ENCODE measurements at regions of chr17 and their contacts with region 1.

Region 1: DNA sequence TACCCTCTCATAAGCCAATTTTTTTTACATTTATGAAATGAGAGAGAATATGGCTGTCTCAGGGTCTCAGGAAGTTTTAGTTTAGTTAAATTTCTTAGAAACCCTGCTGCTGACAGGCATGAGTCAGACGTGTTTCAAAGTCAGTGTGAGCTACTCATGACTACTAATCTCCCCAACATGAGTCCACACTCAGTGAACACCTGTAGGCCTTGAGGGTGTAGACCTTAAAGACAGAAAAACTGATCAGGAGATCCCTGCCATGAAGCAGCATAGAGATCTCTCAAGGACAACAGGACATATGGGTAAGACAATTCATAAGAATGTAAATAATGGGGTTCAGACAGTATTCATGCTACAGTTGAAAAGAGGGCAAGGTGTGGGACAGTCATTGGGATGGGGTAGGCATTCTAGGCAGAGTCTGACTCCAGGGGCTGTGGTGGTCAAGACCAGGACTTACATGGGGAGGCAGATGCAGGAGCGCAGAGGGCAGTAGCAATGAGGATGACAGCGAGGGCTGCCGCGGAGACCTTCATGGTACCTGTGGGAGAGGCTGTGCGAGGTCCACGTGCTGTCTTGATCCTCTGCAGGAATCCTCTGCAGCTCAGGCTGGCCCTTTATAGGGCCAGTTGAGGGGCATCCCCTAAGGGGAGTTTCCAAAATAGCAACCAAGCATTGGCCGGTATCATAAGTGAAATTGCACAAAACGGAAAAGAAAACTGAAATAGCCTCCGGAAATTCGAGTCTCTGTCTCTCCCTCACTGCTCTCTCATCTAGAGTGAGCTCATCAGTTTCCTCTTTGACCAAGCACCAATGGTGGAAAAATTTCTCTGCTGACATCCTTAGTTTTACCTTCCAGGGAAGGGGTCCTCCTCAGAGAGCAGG is at the start of gene CCL5:
- DNase-seq: peak; percentile 82
- H3K4me3 Mint-ChIP-seq: peak within 1 kb of the TSS; percentile 94
- H3K27ac Mint-ChIP-seq: peak within 1 kb of the TSS; percentile 95
- H3K4me1 Mint-ChIP-seq: peaks cover 58% of the 10 kb centered on the region
- H3K27me3 Mint-ChIP-seq: no peaks in the 10 kb centered on the region
- total RNA-seq, gene CCL5: 482 to 491 TPM

Region 2: DNA sequence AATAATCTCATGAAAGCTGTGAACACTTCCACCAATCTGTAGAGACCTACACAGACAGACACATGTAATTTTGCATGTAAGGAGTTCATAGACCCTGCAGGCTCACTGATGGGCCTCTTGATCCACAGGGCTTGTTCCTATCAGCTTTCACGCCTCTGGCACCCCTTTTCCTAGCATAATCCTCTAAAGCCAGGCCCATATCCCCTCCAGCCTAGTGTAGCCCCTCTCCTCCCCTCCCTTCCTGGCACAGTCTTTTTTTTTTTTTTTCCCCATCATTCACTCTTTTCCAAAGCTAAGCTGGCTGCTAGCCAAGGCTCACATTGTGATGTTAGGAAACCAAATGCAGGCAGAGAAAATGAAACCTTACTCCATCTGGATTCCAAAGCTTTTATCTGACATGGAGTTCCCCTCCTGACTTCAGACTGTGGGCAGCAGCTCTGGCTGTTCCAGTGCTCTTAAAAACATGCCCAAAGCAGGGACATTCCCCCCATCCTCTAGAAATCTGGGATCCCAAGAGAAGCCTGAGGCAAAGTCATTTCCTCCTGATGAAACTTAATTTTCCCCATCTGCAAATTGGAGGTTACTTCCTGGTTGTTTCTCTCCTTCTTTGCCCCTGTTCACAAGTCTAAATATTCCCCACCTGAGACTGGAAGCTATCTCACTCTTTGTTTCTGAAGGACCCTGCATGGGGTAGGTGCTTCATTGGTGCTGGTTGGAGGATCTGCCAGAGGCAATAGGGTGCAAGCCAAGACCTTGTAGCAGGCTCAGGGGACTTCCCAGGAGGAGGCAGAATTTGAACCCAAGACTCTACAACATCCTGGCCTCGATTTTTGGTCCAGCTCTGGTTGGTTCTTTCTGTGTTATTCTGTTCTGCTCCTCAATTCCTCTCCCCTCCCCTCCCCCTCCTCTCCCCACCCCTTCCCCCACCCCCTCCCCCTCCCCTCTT is 10.1 kb after region 1 on chr17:
- CTCF ChIA-PET with region 1: interaction called, 10 read pairs
- POLR2A ChIA-PET with region 1: interaction called, 228 read pairs
- DNase-seq: no peak
- H3K4me3 Mint-ChIP-seq: peak overlapping the region; percentile 22
- H3K27ac Mint-ChIP-seq: peak overlapping the region; percentile 86
- H3K4me1 Mint-ChIP-seq: peaks cover 69% of the 10 kb centered on the region
- H3K27me3 Mint-ChIP-seq: no peaks in the 10 kb centered on the region

Region 3: GRCh38 chr17:35898283-35899070 is 18.5 kb after region 1 on chr17:
- CTCF ChIA-PET with region 1: interaction called, 7 read pairs
- POLR2A ChIA-PET with region 1: interaction called, 228 read pairs
- DNase-seq: peak; percentile 68
- H3K4me3 Mint-ChIP-seq: peak overlapping the region; percentile 47
- H3K27ac Mint-ChIP-seq: peak overlapping the region; percentile 85
- H3K4me1 Mint-ChIP-seq: peaks cover 78% of the 10 kb centered on the region
- H3K27me3 Mint-ChIP-seq: no peaks in the 10 kb centered on the region

Region 4: DNA sequence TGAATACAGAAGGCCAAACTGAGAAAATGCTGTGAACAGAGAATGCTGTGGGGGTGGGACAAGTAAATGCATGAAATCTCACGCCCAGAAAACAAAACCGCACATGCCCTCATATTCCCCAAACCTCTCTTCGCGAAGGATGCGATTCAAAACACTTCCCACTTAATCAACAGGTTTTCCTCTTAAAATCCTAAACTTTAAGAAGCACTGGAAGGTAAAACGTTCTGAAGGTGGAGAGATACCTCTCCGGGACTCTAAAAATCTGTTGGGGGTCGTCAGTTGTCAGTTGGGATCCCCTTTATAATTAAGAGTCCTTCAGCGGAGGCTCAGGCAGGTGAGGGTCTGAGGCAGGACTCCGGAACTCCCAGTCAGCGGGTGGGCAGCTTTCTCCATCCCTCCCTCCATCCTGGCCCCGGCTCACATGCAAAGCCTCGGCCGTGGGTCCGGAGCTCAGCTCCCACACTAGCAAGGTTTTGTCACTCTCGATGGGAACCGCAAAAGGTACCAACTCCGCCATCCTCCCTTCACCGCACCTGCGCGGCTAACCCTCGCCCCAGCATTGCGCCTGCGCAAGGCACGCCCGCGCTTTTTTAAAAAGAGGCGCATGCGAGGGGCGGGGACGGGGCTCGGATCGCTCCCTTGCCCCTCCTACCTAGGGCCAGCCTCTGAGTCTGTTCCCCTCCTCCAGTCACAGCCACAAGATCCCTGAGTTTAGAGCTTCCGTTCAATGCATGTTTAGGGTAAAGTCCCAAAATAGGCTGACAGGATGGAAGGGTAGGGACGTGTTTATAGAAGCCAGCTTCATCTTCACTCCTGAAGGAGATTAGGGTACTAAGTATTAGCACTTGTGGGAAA is 50.4 kb after region 1 on chr17 and contains the start of gene RDM1:
- CTCF ChIA-PET with region 1: interaction called, 3 read pairs
- POLR2A ChIA-PET with region 1: interaction called, 40 read pairs
- DNase-seq: peak; percentile 93
- H3K4me3 Mint-ChIP-seq: peak within 1 kb of the TSS; percentile 84
- H3K27ac Mint-ChIP-seq: peak within 1 kb of the TSS; percentile 74
- H3K4me1 Mint-ChIP-seq: peaks cover 32% of the 10 kb centered on the region
- H3K27me3 Mint-ChIP-seq: peaks cover 7% of the 10 kb centered on the region
- total RNA-seq, gene RDM1: 14.4 to 16.9 TPM

Region 5: GRCh38 chr17:36089888-36090836 is 210.1 kb after region 1 on chr17 and contains the start of gene CCL3:
- CTCF ChIA-PET with region 1: no interaction called
- POLR2A ChIA-PET with region 1: no interaction called
- DNase-seq: peak; percentile 47
- H3K4me3 Mint-ChIP-seq: peak within 1 kb of the TSS; percentile 52
- H3K27ac Mint-ChIP-seq: peak within 1 kb of the TSS; percentile 78
- H3K4me1 Mint-ChIP-seq: peaks cover 67% of the 10 kb centered on the region
- H3K27me3 Mint-ChIP-seq: no peaks in the 10 kb centered on the region
- total RNA-seq, gene CCL3: 106 to 112 TPM